Activated CD4-positive, alpha-beta T cell treated with anti-CD3 and anti-CD28 coated beads for 36 hours (primary cell): ENCODE measurements at regions of chr3 and their contacts with region 1.

Region 1: GRCh38 chr3:130746246-130747039 is at the start of gene PIK3R4:
- DNase-seq: peak; percentile 96
- ATAC-seq: peak; percentile 83
- H3K4me3 Mint-ChIP-seq: no peak within 1 kb of the TSS
- H3K27ac Mint-ChIP-seq: peak within 1 kb of the TSS; percentile 95
- H3K4me1 Mint-ChIP-seq: peaks cover 42% of the 10 kb centered on the region
- H3K27me3 Mint-ChIP-seq: no peaks in the 10 kb centered on the region
- total RNA-seq, gene PIK3R4: 27.3 to 32.3 TPM

Region 2: GRCh38 chr3:130725746-130726145 is 20.7 kb before region 1 on chr3:
- CTCF ChIA-PET with region 1: interaction called, 4 read pairs
- POLR2A ChIA-PET with region 1: no interaction called
- intact Hi-C with region 1: loop called in 1 of 2 experiments (anchors 2 kb)
- DNase-seq: no peak
- ATAC-seq: no peak
- H3K4me3 Mint-ChIP-seq: no peak overlapping the region
- H3K27ac Mint-ChIP-seq: no peak overlapping the region
- H3K4me1 Mint-ChIP-seq: peaks cover 6% of the 10 kb centered on the region
- H3K27me3 Mint-ChIP-seq: no peaks in the 10 kb centered on the region

Region 3: GRCh38 chr3:131026321-131027178 is 280.1 kb after region 1 on chr3 and contains the starts of genes ASTE1 and NEK11:
- CTCF ChIA-PET with region 1: interaction called, 3 read pairs
- POLR2A ChIA-PET with region 1: no interaction called
- intact Hi-C with region 1: loop called in 1 of 2 experiments (anchors 1 kb)
- DNase-seq: peak; percentile 95
- ATAC-seq: peak; percentile 98
- H3K4me3 Mint-ChIP-seq: peak within 1 kb of the TSS; percentile 90
- H3K27ac Mint-ChIP-seq: peak within 1 kb of the TSS; percentile 96
- H3K4me1 Mint-ChIP-seq: peaks cover 46% of the 10 kb centered on the region
- H3K27me3 Mint-ChIP-seq: no peaks in the 10 kb centered on the region
- total RNA-seq, gene ASTE1: 8.2 to 9.1 TPM
- total RNA-seq, gene NEK11: 1.0 to 1.3 TPM

Region 4: DNA sequence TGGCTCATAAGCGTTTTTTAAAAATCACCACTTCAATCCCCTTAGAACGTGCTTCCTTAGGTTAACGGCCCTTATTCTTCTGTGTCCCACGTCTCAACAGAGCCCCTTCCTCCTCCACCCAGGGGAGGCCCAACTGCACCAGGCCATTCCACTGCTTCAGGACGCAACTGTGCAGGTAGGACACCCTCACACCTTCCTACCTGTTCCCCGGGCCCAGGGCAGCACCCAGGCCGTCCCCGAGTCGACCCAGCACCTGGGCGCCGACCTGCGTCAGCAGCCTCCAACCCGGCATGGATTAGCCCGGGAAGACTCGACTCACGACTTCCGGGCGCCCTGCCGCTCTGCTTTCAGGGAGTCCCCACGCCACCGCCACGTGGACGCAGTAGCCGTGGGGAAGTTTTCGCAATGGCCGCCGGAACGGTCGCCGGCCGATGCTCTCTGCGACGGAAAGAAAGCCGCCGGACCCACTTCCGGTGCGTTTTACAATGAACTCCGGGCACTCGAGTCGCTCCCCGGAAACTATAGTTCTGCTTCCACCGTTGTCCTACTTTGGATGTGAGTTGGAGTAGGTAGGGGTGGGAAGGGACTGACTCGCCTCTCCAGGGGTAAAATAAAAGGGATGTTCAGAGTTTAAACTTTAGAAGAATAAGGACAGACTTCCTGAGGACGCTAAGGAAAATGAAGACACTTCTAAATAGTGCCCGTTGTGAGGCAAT is 756.2 kb after region 1 on chr3 and contains the start of gene MRPL3:
- CTCF ChIA-PET with region 1: no interaction called
- POLR2A ChIA-PET with region 1: no interaction called
- intact Hi-C with region 1: loop called (anchors 1 to 5 kb)
- DNase-seq: peak; percentile 92
- ATAC-seq: peak; percentile 97
- H3K4me3 Mint-ChIP-seq: peak within 1 kb of the TSS; percentile 98
- H3K27ac Mint-ChIP-seq: peak within 1 kb of the TSS; percentile 93
- H3K4me1 Mint-ChIP-seq: peaks cover 33% of the 10 kb centered on the region
- H3K27me3 Mint-ChIP-seq: no peaks in the 10 kb centered on the region
- total RNA-seq, gene MRPL3: 166 to 278 TPM

Region 5: DNA sequence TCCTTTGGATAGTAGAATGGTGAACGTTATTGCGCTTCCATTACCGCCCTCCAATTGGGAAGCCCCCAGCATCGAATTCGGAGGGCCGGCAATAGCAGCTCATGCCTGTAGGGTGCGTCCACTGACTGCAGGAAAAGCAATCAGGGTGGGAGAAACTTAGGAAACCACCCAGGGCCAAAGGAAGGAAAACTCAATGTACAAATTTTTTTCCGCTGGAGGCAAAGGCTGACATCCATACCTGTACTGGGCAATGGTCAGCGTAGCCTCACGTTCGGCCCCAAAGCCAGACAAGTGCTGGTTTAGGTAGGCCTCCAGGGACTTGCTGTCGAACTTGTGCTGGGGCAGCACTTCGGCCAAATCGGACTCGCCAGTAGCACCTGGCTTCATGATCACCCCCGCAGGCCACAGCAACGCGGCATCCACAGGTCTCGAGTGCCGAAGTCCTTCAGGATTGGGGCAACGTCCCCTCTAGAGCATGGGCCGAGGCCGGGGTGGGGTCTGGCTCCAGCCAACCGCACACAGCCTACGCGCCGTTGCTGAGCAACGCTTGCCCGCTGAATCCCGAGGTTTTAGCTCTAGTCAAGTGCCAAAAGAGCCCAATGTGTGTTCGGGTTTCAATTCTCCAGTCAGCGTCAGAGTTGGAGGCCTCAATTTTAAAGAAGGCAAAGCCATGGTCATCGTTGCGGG is 1913.1 kb after region 1 on chr3 and contains the start of gene ACAD11:
- CTCF ChIA-PET with region 1: no interaction called
- POLR2A ChIA-PET with region 1: no interaction called
- intact Hi-C with region 1: loop called in 1 of 2 experiments (anchors 2 kb)
- DNase-seq: peak; percentile 66
- ATAC-seq: peak; percentile 36
- H3K4me3 Mint-ChIP-seq: peak within 1 kb of the TSS; percentile 96
- H3K27ac Mint-ChIP-seq: peak within 1 kb of the TSS; percentile 98
- H3K4me1 Mint-ChIP-seq: peaks cover 51% of the 10 kb centered on the region
- H3K27me3 Mint-ChIP-seq: no peaks in the 10 kb centered on the region
- total RNA-seq, gene ACAD11: 16.1 to 16.9 TPM